Naive thymus-derived CD4-positive, alpha-beta T cell (primary cell): ENCODE measurements at regions of chr2 and their contacts with region 1.

Region 1: GRCh38 chr2:85327822-85328617 is at the start of gene TGOLN2:
- DNase-seq: peak; percentile 91 to 96 (median 95)
- ATAC-seq: peak; percentile 94
- H3K4me3 ChIP-seq: peak within 1 kb of the TSS; percentile 84
- H3K4me3 Mint-ChIP-seq: peak within 1 kb of the TSS; percentile 97 to 100 (median 99)
- H3K27ac ChIP-seq: peak within 1 kb of the TSS; percentile 92
- H3K27ac Mint-ChIP-seq: peak within 1 kb of the TSS; percentile 97 to 100 (median 99)
- H3K4me1 ChIP-seq: peaks cover 24 to 31% of the 10 kb centered on the region in 2 donors
- H3K4me1 Mint-ChIP-seq: peaks cover 31 to 51% (median 46%) of the 10 kb centered on the region in 7 donors
- H3K27me3 ChIP-seq: no peaks in the 10 kb centered on the region
- H3K27me3 Mint-ChIP-seq: no peaks in the 10 kb centered on the region
- total RNA-seq, gene TGOLN2: 144 to 200 (median 178) TPM

Region 2: GRCh38 chr2:84970868-84971509 is 357.0 kb before region 1 on chr2 and contains the start of gene KCMF1:
- CTCF ChIA-PET with region 1: no interaction called
- POLR2A ChIA-PET with region 1: interaction called, 3 read pairs
- intact Hi-C with region 1: loop called (anchors 1 kb)
- DNase-seq: peak; percentile 56 to 83 (median 68)
- ATAC-seq: peak; percentile 72
- H3K4me3 ChIP-seq: peak within 1 kb of the TSS; percentile 85
- H3K4me3 Mint-ChIP-seq: peak within 1 kb of the TSS; percentile 89 to 100 (median 99)
- H3K27ac ChIP-seq: peak within 1 kb of the TSS; percentile 95
- H3K27ac Mint-ChIP-seq: peak within 1 kb of the TSS; percentile 97 to 100 (median 99)
- H3K4me1 ChIP-seq: peaks cover 31 to 33% of the 10 kb centered on the region in 2 donors
- H3K4me1 Mint-ChIP-seq: peaks cover 44 to 67% (median 57%) of the 10 kb centered on the region in 7 donors
- H3K27me3 ChIP-seq: no peaks in the 10 kb centered on the region
- H3K27me3 Mint-ChIP-seq: peaks cover 0 to 4% (median 0%) of the 10 kb centered on the region in 5 donors
- total RNA-seq, gene KCMF1: 57.7 to 81.3 (median 60.8) TPM

Region 3: DNA sequence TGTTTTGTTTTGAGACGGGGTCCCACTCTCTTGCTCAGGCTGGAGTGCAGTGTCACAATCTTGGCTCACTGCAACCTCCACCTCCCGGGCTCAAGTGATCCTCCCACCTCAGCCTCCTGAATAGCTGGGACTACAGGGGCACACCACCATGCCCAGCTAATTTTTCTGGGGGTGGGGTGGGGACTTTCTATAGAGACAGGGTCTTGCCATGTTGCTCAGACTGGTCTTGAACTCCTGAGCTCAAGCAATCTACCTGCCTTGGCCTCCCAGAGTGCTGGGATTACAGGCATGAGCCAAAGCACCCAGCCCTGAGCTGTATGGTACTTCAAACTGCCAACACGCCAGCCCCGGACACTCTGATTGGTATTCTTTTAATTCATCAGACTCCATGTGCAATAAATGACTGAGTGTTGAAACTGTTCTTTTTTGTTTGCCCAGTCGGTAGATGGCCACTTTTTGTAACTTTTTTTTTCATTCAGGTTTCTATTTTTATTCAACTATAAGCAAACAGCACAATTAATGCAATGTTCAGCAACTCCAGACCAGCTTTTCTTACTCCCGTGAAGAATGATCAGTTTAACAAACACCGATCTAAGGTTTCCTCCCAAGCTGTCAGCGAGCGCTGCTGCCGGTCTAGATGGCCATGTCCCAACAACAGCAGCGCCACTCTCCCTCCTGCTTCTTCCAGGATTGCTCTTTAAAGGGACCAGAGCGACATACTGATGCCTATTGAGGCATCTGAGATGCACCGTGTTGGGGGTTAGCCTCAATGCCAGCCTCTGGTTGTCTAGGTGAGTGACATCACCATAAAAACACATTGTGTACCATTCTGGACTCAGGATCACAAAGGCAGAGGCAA is 12.2 kb after region 1 on chr2:
- CTCF ChIA-PET with region 1: no interaction called
- POLR2A ChIA-PET with region 1: interaction called, 211 read pairs
- intact Hi-C with region 1: no loop called
- DNase-seq: no peak
- ATAC-seq: no peak
- H3K4me3 ChIP-seq: no peak overlapping the region
- H3K4me3 Mint-ChIP-seq: no peak overlapping the region
- H3K27ac ChIP-seq: no peak overlapping the region
- H3K27ac Mint-ChIP-seq: no peak overlapping the region
- H3K4me1 ChIP-seq: no peaks in the 10 kb centered on the region
- H3K4me1 Mint-ChIP-seq: no peaks in the 10 kb centered on the region
- H3K27me3 ChIP-seq: no peaks in the 10 kb centered on the region
- H3K27me3 Mint-ChIP-seq: peaks cover 0 to 22% (median 0%) of the 10 kb centered on the region in 5 donors

Region 4: DNA sequence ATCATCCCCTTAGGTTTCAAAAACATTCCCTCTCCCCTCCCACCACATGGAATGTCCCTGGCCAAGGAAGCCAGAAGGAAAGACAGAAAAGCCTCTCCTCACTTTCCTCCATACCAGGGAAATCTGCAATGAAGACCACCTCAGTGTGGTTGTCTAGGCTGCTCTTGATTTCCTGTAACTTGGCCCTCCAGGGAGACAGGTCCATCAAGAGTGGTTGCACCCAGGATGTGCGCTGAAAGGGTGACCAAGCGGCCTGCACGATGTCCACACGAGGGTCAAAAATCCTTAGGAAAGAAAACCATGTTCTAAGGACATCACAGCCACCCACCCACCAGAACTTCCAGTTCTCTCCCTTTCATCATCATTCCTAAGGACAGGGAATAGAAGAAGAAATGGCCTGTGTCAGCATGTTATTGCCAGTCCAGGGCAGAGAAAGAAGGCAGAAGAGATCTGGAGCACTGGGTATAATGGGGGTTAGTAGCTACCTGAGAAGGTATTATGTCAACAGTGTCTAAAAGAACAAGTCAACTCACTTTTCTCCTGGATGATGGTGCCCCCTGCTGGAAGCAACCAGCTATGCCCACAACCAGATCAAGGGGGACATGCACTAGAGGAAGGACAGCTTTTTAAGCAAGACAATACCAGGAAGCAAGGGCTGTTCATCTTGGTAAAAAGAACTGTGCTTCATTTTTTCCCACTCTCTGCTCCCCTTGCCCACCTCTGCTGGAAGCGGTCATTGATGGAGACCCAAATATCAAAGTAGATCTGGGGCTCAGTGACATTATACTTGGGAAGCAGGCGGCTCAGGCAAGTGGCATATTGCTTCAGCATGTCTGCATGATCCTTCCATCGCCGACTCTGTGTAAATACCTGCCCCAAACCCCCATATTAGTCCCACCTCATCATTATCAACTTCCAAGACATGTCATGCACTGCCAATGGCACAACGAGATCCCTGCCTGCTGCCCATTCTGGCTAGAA is 224.0 kb after region 1 on chr2:
- CTCF ChIA-PET with region 1: interaction called, 5 read pairs
- POLR2A ChIA-PET with region 1: interaction called, 9 read pairs
- intact Hi-C with region 1: loop called (anchors 1 kb)
- DNase-seq: peak; percentile 70 to 92 (median 88)
- ATAC-seq: peak; percentile 97
- H3K4me3 ChIP-seq: no peak overlapping the region
- H3K4me3 Mint-ChIP-seq: no peak overlapping the region
- H3K27ac ChIP-seq: no peak overlapping the region
- H3K27ac Mint-ChIP-seq: peak overlapping the region in 5 of 9 donors; percentile 12 to 62 (median 38)
- H3K4me1 ChIP-seq: no peaks in the 10 kb centered on the region
- H3K4me1 Mint-ChIP-seq: peaks cover 0 to 10% (median 6%) of the 10 kb centered on the region in 7 donors
- H3K27me3 ChIP-seq: no peaks in the 10 kb centered on the region
- H3K27me3 Mint-ChIP-seq: no peaks in the 10 kb centered on the region

Region 5: GRCh38 chr2:85611705-85612587 is 283.9 kb after region 1 on chr2 and contains the start of gene C2orf68:
- CTCF ChIA-PET with region 1: no interaction called
- POLR2A ChIA-PET with region 1: interaction called, 14 read pairs
- intact Hi-C with region 1: loop called in 1 of 2 experiments (anchors 2 kb)
- DNase-seq: peak; percentile 61 to 92 (median 75)
- ATAC-seq: peak; percentile 76
- H3K4me3 ChIP-seq: peak within 1 kb of the TSS; percentile 65
- H3K4me3 Mint-ChIP-seq: peak within 1 kb of the TSS; percentile 96 to 100 (median 98)
- H3K27ac ChIP-seq: peak within 1 kb of the TSS; percentile 81
- H3K27ac Mint-ChIP-seq: peak within 1 kb of the TSS; percentile 86 to 99 (median 96)
- H3K4me1 ChIP-seq: peaks cover 11 to 16% of the 10 kb centered on the region in 2 donors
- H3K4me1 Mint-ChIP-seq: peaks cover 14 to 52% (median 44%) of the 10 kb centered on the region in 7 donors
- H3K27me3 ChIP-seq: no peaks in the 10 kb centered on the region
- H3K27me3 Mint-ChIP-seq: no peaks in the 10 kb centered on the region
- total RNA-seq, gene C2orf68: 40.9 to 92.1 (median 51.6) TPM

Region 6: GRCh38 chr2:85813982-85814801 is 486.2 kb after region 1 on chr2:
- CTCF ChIA-PET with region 1: no interaction called
- POLR2A ChIA-PET with region 1: no interaction called
- intact Hi-C with region 1: no loop called
- DNase-seq: peak; percentile 42 to 85 (median 71)
- ATAC-seq: peak; percentile 93
- H3K4me3 ChIP-seq: no peak overlapping the region
- H3K4me3 Mint-ChIP-seq: no peak overlapping the region
- H3K27ac ChIP-seq: no peak overlapping the region
- H3K27ac Mint-ChIP-seq: no peak overlapping the region
- H3K4me1 ChIP-seq: no peaks in the 10 kb centered on the region
- H3K4me1 Mint-ChIP-seq: peaks cover 0 to 3% (median 0%) of the 10 kb centered on the region in 7 donors
- H3K27me3 ChIP-seq: no peaks in the 10 kb centered on the region
- H3K27me3 Mint-ChIP-seq: peaks cover 0 to 29% (median 7%) of the 10 kb centered on the region in 5 donors